HEK293 (cell line): ENCODE measurements at regions of chr15 and their contacts with region 1.

Region 1: GRCh38 chr15:70875001-70875782 is 17.0 kb downstream of the THAP10 start:
- H3K4me3 ChIP-seq: no peak overlapping the region
- H3K27ac ChIP-seq: no peak overlapping the region
- H3K4me1 ChIP-seq: no peaks in the 10 kb centered on the region
- CTCF ChIP-seq: peak; percentile 72

Region 2: DNA sequence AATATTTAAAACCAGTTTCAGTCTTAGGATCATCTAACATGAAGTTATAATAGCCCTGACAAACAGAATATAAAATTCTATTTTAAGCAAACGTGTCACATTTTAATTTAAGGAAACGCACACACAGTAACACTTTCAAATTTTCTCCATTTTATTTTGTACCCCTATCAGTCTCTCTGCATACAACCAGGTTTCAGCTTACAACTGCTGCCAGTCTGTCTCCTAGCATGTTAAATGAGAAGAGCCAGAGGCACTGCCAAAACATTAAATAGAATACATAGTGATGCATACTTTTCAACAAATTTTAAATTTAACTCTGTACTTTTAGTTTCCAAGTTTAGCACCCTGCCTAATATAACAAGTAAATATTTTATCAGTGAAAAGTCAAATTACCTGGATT is 172.6 kb before region 1 on chr15:
- CTCF ChIA-PET with region 1: no interaction called
- POLR2A ChIA-PET with region 1: no interaction called
- H3K4me3 ChIP-seq: no peak overlapping the region; the same call in 1 of the 2 replicates
- H3K27ac ChIP-seq: no peak overlapping the region
- H3K4me1 ChIP-seq: peaks cover 56% of the 10 kb centered on the region
- CTCF ChIP-seq: no peak

Region 3: GRCh38 chr15:70853821-70854666 is 21.1 kb before region 1 on chr15 and contains the start of gene LARP6:
- CTCF ChIA-PET with region 1: interaction called, 15 read pairs
- POLR2A ChIA-PET with region 1: interaction called, 6 read pairs
- H3K4me3 ChIP-seq: peak within 1 kb of the TSS; percentile 76
- H3K27ac ChIP-seq: peak within 1 kb of the TSS; percentile 93
- H3K4me1 ChIP-seq: peaks cover 9% of the 10 kb centered on the region
- CTCF ChIP-seq: no peak

Region 4: GRCh38 chr15:70863450-70864218 is 11.6 kb before region 1 on chr15:
- CTCF ChIA-PET with region 1: interaction called, 17 read pairs
- POLR2A ChIA-PET with region 1: no interaction called
- H3K4me3 ChIP-seq: no peak overlapping the region
- H3K27ac ChIP-seq: no peak overlapping the region
- H3K4me1 ChIP-seq: no peaks in the 10 kb centered on the region; the same call in 1 of the 2 replicates
- CTCF ChIP-seq: no peak